Left cardiac atrium (tissue), 4 donors: ENCODE measurements at regions of chr2 and their contacts with region 1.

Region 1: DNA sequence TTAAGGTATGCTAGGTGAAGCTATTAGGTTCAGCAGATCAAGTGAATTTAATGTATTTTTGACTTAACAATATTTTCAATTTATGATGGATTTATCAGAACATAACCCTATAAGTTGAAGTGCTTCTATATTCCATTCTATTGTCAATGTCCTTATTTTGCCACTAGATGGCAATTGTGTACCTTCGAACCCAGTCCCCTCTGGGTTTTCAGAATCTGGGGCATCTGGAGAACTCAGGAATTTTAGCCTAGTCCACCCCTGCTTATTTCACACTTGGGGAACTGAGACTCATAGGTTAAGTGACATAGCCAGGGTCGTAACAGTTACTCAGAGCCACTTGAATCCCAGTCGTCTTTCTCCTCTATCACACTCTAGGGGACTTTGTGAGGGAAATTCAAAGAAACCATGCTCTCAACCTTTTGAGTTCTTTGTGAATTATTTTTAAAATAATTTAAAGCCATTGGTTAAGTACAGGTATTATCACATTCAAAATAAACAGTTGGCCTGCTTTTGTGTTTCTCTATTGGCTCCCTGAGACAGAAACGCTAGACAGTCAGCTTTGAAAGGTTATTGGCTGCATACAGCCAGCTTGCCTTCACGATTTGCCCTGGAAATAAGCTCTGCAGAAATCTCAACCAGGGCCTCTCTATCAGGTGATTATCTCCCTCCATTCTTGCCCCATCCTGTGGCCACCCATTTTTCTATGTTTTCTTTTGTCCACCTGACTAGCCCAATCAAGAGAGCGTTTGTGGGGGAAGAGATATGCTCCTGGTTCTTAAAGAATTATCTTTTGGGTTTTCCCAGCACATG is 145.0 kb downstream of the TTC27 start:
- DNase-seq: no peak
- ATAC-seq: peak; percentile 72 to 75

Region 2: GRCh38 chr2:32792416-32792815 is 19.6 kb after region 1 on chr2:
- intact Hi-C with region 1: no loop called
- DNase-seq: peak; percentile 70
- ATAC-seq: peak; percentile 87 to 90

Region 3: DNA sequence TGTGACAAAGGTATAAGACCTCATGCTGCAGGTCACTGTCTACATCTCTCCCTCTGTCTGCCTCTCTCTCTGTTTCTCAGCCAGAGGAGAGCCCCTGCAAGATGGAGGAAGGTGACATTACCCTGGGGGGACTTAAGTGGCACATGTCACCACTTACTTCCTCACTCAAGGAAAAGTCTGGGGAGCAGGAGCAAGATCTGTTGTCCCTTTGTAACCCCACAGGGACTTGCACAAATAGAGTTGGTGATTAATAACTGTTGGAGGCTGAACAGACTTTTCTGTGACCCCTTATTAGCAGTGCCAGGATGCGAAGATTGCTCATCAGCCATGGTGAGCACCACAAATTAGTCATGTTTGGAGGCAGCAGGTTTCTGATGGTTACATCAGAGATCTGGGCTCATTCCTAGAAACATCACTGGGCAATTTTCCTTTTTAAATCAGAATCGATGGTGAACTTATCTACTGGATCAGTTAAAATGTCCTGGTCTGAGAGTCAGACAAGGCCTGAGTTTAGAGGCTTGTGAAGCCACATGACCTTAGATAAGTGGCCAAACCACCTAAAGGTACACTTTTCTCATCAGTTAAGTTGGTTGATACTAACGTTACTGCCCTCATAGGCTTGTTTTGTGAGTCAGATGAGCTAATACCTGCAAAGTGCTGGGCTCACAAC is 92.7 kb after region 1 on chr2:
- intact Hi-C with region 1: no loop called
- DNase-seq: no peak
- ATAC-seq: peak in 1 of 2 donors; percentile 41

Region 4: DNA sequence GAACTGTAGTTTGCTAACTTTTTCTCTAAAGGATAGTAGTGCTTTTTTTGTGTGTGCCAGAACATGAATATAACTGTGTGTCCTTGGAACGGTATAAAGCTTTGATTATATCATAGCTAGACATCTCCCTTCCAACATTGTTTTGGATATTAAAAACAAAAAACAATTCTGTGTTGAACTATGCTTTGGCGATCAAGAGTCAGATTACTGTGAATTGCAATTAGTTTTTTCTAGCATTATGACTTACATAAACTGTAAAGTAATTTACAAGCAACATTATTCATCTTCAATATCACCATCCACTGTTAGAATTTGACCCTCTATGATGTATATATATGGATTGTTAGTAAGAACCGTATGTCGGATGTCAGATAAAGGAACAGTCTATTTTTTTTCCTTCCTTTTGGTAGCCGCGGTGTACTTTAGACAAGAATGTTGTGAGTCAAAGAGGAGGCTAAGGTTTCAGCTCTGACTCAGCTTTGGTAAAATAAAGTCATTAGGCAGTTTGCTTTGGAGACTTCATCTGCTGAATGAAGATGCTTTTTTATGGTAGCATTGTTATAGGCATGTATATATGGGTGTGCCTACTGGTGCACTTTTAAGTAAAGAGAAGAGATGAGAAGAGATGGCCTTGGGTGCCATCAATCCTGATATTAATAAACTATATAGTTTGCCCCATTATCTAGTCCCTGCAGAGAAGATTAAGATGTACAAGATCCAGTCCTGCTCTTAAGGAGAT is 250.3 kb after region 1 on chr2:
- intact Hi-C with region 1: loop called in 1 of 2 experiments (anchors 10 kb)
- DNase-seq: no peak
- ATAC-seq: peak; percentile 18 to 62

Region 5: DNA sequence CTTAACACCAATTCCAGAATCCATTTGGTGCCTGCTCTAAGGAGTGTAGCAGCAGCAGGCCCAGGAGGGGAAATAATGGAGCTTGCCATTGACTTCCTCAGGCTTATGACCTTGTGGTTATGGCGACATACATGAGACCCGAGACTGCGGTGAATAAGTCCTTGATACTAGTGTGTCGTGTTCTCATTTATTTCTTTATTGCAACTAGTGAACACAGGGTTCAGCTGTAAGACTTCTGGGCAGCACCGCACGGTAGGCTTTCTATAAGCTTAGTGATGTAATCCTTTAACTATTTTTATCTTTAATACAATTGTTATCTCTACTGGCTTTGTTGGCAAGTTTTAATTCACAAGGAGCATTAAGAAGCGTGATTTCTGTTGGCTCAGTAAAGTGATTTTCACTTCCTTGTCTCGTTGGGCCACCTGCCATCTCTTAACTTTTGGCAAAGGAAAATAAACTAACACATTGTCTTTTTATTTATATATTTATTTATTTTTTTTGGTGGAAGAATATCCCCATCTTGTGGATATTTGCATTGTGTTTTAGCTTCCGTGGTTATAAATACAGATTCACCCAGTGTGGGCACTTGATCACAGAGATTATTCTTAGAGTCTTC is 313.7 kb after region 1 on chr2:
- intact Hi-C with region 1: loop called in 1 of 2 experiments (anchors 5 kb)
- DNase-seq: no peak
- ATAC-seq: peak; percentile 50 to 53

Region 6: GRCh38 chr2:33441235-33441810 is 668.5 kb after region 1 on chr2:
- intact Hi-C with region 1: loop called in 1 of 2 experiments (anchors 10 kb)
- DNase-seq: peak; percentile 28
- ATAC-seq: peak; percentile 82

Region 7: GRCh38 chr2:33666628-33667254 is 893.9 kb after region 1 on chr2:
- intact Hi-C with region 1: no loop called
- DNase-seq: no peak
- ATAC-seq: no peak